ENCODE measurements at regions of chr9 and their contacts with region 1.

Region 1: GRCh38 chr9:134325817-134326723 is at the start of gene RXRA:
- DNase-seq: peak; percentile 92
- ATAC-seq: peak; percentile 57
- total RNA-seq, gene RXRA: 78.1 TPM

Region 2: DNA sequence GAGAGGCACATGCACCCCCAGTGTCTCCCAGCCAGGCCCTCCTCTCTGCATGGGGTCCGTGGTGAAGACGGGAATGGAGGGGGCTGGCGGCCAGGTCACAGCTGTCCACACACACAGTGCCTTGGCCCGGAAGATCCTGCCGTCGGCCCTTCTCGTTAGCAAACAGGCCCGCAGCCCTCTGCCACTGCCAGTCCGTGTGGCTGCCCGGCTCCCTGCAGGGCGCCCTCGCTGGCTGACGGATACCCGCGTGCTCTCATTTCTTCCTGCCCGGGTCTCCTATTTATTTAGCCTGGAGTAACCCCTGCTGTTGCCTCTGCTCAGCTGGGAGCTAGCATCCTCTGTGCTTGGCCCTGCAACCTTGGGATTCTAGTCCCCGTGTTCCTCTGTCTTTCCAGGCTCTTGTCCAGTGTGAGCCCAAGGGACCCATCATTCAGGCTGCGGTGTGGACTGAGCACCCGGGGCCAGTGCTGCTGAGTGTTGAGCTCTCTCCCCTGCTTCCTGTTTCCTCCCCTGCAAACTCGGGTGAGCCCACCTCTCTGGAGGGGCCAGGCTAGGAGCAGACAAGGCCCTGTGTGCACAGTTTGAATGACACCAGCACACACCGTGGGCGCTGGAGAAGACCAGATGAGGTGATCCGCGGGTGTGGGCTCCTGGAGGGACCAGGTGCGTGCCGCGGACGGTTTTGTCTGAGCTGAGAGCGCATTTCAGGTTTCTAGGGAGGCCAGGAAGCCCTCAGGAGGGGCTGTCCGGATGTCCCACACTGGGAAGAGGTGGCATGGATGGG is 147.1 kb before region 1 on chr9:
- intact Hi-C with region 1: loop called (anchors 10 kb)
- DNase-seq: peak; percentile 81
- ATAC-seq: peak; percentile 83

Region 3: GRCh38 chr9:134381671-134382516 is 55.8 kb after region 1 on chr9:
- intact Hi-C with region 1: loop called (anchors 2 kb)
- DNase-seq: no peak
- ATAC-seq: peak; percentile 2

Region 4: DNA sequence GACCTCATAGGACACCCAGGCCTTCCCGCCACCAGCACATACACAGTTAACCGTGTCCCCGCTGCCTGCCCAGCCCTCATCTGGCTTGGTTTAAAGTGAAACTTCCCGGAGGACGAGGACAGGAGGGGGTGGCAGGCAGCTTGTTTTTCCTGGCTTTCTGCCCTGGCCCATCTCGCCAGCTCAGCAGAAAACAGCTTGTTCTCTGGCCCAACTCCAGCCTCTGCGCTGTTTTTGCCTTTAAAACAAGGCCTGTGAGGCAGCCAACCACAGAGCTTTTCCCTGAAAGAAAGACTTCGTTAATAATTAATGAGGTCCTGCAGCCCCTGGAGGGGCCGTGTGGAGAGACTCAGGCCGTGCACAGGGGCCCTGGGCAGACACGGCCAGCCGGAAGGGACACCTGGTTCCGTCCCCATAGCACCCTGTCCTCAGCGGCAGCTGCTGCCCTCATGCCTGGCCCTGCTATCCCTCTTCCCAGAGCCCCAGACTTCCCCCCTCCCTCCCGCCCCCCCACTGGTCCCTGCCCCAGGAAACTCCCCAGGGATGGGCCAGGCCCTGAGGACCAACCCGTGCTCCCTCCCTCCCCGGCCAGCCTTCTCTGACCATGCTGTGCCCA is 108.9 kb after region 1 on chr9:
- intact Hi-C with region 1: loop called (anchors 10 kb)
- DNase-seq: peak; percentile 97
- ATAC-seq: peak; percentile 79